CD4-positive, alpha-beta memory T cell (primary cell): ENCODE measurements at regions of chr14 and their contacts with region 1.

Region 1: GRCh38 chr14:77023001-77023996 is 5.2 kb downstream of the IRF2BPL start:
- DNase-seq: no peak
- H3K4me3 ChIP-seq: peak overlapping the region in 1 of 2 donors; percentile 9
- H3K4me3 Mint-ChIP-seq: peak overlapping the region; percentile 30 to 73 (median 65)
- H3K27ac ChIP-seq: no peak overlapping the region
- H3K27ac Mint-ChIP-seq: peak overlapping the region; percentile 66 to 98 (median 83)
- H3K4me1 ChIP-seq: peaks cover 52% of the 10 kb centered on the region
- H3K4me1 Mint-ChIP-seq: peaks cover 26 to 49% (median 37%) of the 10 kb centered on the region in 4 donors
- H3K27me3 ChIP-seq: no peaks in the 10 kb centered on the region
- H3K27me3 Mint-ChIP-seq: no peaks in the 10 kb centered on the region

Region 2: DNA sequence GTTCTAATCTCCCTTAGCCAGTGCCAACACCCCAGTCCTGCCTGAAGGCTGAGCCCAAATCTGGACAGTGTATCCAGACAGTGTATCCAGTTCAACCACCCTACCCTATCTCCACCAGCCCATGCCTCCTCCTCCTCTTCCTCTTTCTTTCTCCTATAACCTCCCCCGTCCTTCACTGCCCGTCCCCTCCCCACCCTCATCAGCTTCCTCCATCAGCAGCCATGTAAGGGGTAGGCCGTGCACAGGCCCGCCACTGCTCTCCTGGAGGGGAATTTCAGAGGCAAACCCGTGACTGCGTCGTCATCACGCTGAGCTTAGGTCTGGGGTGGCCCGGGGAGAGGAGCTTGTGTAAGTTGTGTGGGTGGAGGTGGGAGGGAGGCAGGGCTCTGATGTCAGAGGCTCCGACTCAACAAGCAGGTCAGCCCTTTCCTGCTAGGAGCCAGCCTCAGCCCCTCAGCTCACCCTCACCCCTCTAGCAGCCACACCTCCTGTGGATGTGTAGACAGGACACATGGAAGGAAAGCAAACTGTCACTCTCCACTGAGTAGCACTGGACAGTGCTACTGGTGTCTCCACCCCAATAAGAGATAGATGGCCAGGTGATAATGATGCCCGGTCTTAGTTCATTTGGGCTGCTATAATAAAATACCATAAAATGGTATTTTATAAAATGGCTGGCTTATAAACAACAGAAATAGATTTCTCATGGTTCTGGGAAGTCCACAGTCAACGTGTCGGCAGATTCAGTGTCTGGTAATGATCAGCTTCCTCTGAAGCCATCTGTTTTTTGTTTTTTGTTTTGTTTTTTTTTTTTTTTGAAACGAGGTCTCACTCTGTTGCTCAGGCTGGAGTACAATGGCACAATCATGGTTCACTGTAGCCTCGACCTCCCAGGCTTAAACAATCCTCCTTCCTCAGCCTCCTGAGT is 45.2 kb before region 1 on chr14:
- CTCF ChIA-PET with region 1: no interaction called
- POLR2A ChIA-PET with region 1: interaction called, 13 read pairs
- intact Hi-C with region 1: no loop called
- DNase-seq: peak; percentile 67 to 97 (median 74)
- H3K4me3 ChIP-seq: no peak overlapping the region
- H3K4me3 Mint-ChIP-seq: peak overlapping the region in 7 of 8 donors; percentile 4 to 75 (median 43)
- H3K27ac ChIP-seq: peak overlapping the region; percentile 54
- H3K27ac Mint-ChIP-seq: peak overlapping the region; percentile 79 to 94 (median 93)
- H3K4me1 ChIP-seq: peaks cover 18% of the 10 kb centered on the region
- H3K4me1 Mint-ChIP-seq: peaks cover 10 to 13% (median 11%) of the 10 kb centered on the region in 4 donors
- H3K27me3 ChIP-seq: no peaks in the 10 kb centered on the region
- H3K27me3 Mint-ChIP-seq: no peaks in the 10 kb centered on the region

Region 3: GRCh38 chr14:76985540-76986230 is 37.6 kb before region 1 on chr14:
- CTCF ChIA-PET with region 1: no interaction called
- POLR2A ChIA-PET with region 1: interaction called, 3 read pairs
- intact Hi-C with region 1: loop called (anchors 5 kb)
- DNase-seq: no peak
- H3K4me3 ChIP-seq: no peak overlapping the region
- H3K4me3 Mint-ChIP-seq: no peak overlapping the region
- H3K27ac ChIP-seq: no peak overlapping the region
- H3K27ac Mint-ChIP-seq: peak overlapping the region in 3 of 7 donors; percentile 9 to 68 (median 15)
- H3K4me1 ChIP-seq: peaks cover 12% of the 10 kb centered on the region
- H3K4me1 Mint-ChIP-seq: peaks cover 12 to 28% (median 15%) of the 10 kb centered on the region in 4 donors
- H3K27me3 ChIP-seq: no peaks in the 10 kb centered on the region
- H3K27me3 Mint-ChIP-seq: no peaks in the 10 kb centered on the region

Region 4: DNA sequence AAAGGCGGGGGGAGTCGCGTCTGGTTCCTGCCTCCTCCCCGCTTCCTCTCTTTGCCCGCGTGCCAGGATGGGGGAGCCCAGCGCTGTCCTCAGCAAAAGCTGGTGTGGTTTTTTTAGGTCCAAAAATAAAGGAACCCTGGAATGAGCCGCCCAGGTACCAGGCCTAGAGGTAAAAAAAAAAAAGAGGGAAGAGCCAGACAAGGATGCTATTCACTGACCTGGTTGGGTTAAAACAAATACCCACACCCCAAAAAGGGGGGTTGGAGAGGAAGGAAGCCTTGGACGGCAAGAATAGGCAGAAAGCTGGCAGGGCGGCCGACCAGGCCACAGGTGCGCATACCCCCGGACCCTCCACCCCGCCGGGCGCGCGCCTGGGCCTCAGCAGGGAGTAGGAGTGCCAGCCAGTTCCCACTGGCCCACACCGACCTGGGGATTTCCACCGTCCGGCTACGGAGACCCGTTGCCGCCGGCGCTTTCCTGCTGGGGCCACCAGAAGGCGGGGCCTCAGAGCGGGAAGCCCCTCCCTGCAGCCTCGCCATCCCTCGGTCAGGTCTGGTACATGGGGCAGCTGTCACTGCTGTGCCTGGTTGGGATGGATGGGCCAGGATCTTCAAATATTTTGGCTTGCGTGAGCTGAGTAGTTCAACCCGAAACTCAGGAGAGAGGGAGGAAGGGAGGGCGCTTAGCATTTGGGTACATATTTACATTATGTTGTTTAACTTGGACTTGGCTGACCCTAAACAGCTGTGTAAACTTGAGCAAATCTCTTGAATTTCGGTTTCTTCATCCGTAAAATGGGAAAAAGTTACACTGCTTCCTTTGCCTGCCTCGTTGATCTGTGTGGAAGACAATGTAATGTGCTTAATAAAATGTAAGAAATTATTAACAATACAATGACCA is 10.6 kb after region 1 on chr14:
- CTCF ChIA-PET with region 1: interaction called, 59 read pairs
- POLR2A ChIA-PET with region 1: interaction called, 456 read pairs
- intact Hi-C with region 1: no loop called
- DNase-seq: peak; percentile 63 to 90 (median 72)
- H3K4me3 ChIP-seq: peak overlapping the region; percentile 71 to 84
- H3K4me3 Mint-ChIP-seq: peak overlapping the region; percentile 91 to 94 (median 92)
- H3K27ac ChIP-seq: peak overlapping the region; percentile 98
- H3K27ac Mint-ChIP-seq: peak overlapping the region; percentile 94 to 99 (median 98)
- H3K4me1 ChIP-seq: peaks cover 93% of the 10 kb centered on the region
- H3K4me1 Mint-ChIP-seq: peaks cover 53 to 87% (median 70%) of the 10 kb centered on the region in 4 donors
- H3K27me3 ChIP-seq: no peaks in the 10 kb centered on the region
- H3K27me3 Mint-ChIP-seq: no peaks in the 10 kb centered on the region

Region 5: DNA sequence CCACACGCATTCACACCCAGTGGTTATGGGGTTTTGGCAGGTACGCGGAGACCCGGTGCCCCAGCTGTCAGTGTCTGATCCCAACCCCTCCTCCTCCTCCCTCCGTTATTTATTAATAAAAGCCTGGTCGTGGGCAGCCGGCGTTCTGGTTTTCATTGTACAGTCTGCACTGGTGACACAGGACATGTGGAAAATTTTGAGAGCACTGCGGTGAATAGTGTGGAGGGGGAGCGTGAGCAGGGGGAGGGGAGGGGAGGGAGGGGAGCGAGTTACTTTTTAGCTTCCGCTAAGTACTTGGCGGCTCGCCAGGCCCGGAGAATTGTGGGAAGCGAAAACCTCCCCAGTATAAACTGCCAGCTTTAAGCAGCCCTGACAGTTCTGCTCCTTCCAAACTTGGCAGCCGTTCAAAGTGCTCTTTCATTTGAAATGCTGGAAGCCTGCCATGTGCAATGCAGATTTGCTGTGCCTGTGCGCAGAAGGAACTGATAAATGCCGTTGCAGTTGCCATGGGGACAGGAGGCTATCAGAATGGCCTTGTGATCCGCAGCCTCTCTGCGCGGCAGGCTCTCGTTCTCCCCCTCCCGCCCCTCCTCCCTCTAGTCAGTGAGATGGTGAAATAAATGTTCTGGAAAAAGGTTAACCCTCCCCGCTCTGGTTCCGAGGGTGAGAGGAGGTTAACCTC is 16.9 kb after region 1 on chr14:
- CTCF ChIA-PET with region 1: interaction called, 59 read pairs
- POLR2A ChIA-PET with region 1: interaction called, 456 read pairs
- intact Hi-C with region 1: loop called (anchors 1 kb)
- DNase-seq: peak; percentile 96 to 99 (median 99)
- H3K4me3 ChIP-seq: peak overlapping the region; percentile 8 to 53
- H3K4me3 Mint-ChIP-seq: peak overlapping the region; percentile 84 to 93 (median 86)
- H3K27ac ChIP-seq: peak overlapping the region; percentile 95
- H3K27ac Mint-ChIP-seq: peak overlapping the region; percentile 97 to 100 (median 99)
- H3K4me1 ChIP-seq: peaks cover 94% of the 10 kb centered on the region
- H3K4me1 Mint-ChIP-seq: peaks cover 50 to 97% (median 84%) of the 10 kb centered on the region in 4 donors
- H3K27me3 ChIP-seq: no peaks in the 10 kb centered on the region
- H3K27me3 Mint-ChIP-seq: no peaks in the 10 kb centered on the region

Region 6: DNA sequence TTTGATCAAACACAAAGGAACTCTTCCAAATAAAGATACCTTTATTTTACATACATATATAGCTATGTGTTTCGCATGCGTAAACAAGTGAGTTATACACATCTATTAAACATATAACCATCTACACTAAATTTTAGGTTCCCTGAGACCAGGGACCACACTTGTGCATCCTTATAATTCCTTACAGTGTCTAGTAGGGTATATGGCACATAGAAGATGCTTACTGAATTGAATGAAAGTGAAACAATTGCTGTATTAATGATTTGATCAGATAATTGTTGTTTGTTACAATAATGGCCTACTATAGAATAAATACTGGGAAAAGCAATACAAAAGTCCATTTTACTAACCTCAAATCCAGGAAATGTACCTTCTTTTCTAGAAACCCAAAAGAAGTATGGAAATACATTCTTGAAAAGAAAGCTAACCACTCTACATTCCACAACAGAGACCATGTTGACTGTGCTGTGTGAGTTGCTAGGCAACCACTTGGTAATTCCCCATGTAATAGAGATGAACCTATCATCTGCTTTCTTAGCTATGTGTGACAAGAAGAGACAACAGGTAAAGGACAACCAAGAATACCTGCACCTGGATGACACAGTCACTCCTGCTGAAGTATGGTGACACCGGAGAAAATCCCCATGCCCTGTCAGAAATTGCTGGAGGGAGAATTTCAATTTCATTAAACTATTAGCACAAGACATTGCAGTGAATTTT is 62.9 kb after region 1 on chr14:
- CTCF ChIA-PET with region 1: no interaction called
- POLR2A ChIA-PET with region 1: no interaction called
- intact Hi-C with region 1: no loop called
- DNase-seq: peak in 4 of 5 donors; percentile 41 to 59 (median 48)
- H3K4me3 ChIP-seq: no peak overlapping the region
- H3K4me3 Mint-ChIP-seq: peak overlapping the region in 1 of 8 donors; percentile 33
- H3K27ac ChIP-seq: no peak overlapping the region
- H3K27ac Mint-ChIP-seq: peak overlapping the region in 5 of 7 donors; percentile 68 to 97 (median 90)
- H3K4me1 ChIP-seq: peaks cover 17% of the 10 kb centered on the region
- H3K4me1 Mint-ChIP-seq: peaks cover 4 to 19% (median 8%) of the 10 kb centered on the region in 4 donors
- H3K27me3 ChIP-seq: no peaks in the 10 kb centered on the region
- H3K27me3 Mint-ChIP-seq: peaks cover 2 to 9% of the 10 kb centered on the region in 2 donors

Region 7: GRCh38 chr14:77660754-77661153 is 637.5 kb after region 1 on chr14:
- CTCF ChIA-PET with region 1: no interaction called
- POLR2A ChIA-PET with region 1: no interaction called
- intact Hi-C with region 1: no loop called
- DNase-seq: no peak
- H3K4me3 ChIP-seq: no peak overlapping the region
- H3K4me3 Mint-ChIP-seq: no peak overlapping the region
- H3K27ac ChIP-seq: no peak overlapping the region
- H3K27ac Mint-ChIP-seq: no peak overlapping the region
- H3K4me1 ChIP-seq: no peaks in the 10 kb centered on the region
- H3K4me1 Mint-ChIP-seq: peaks cover 0 to 3% (median 0%) of the 10 kb centered on the region in 4 donors
- H3K27me3 ChIP-seq: no peaks in the 10 kb centered on the region
- H3K27me3 Mint-ChIP-seq: no peaks in the 10 kb centered on the region